Right cardiac atrium (tissue), 5 donors: ENCODE measurements at regions of chr11 and their contacts with region 1.

Region 1: GRCh38 chr11:41245702-41246398 is 213.6 kb downstream of the LRRC4C start:
- DNase-seq: peak in 1 of 3 donors; percentile 38
- ATAC-seq: peak; percentile 36 to 76
- H3K4me3 ChIP-seq: no peak overlapping the region
- H3K27ac ChIP-seq: no peak overlapping the region
- H3K4me1 ChIP-seq: no peaks in the 10 kb centered on the region
- H3K27me3 ChIP-seq: no peaks in the 10 kb centered on the region

Region 2: GRCh38 chr11:41431784-41432183 is 185.9 kb after region 1 on chr11:
- intact Hi-C with region 1: loop called in 2 of 4 experiments (anchors 10 kb)
- DNase-seq: no peak
- ATAC-seq: no peak
- H3K4me3 ChIP-seq: no peak overlapping the region
- H3K27ac ChIP-seq: no peak overlapping the region
- H3K4me1 ChIP-seq: no peaks in the 10 kb centered on the region
- H3K27me3 ChIP-seq: no peaks in the 10 kb centered on the region